Dorsolateral prefrontal cortex (tissue), 120 donors: ENCODE measurements at regions of chr5 and their contacts with region 1.

Region 1: GRCh38 chr5:80093796-80094195 is 58.6 kb downstream of the THBS4 start:
- DNase-seq: no peak
- H3K4me3 ChIP-seq: no peak overlapping the region
- H3K27ac ChIP-seq: peak overlapping the region in 1 of 59 donors; percentile 10
- H3K27me3 ChIP-seq: no peaks in the 10 kb centered on the region
- CTCF ChIP-seq: no peak

Region 2: GRCh38 chr5:80153586-80154126 is 59.9 kb after region 1 on chr5:
- intact Hi-C with region 1: loop called in 1 of 2 experiments (anchors 5 kb)
- DNase-seq: peak in 5 of 10 donors; percentile 44 to 56 (median 51)
- H3K4me3 ChIP-seq: peak overlapping the region in 4 of 59 donors; percentile 1 to 30 (median 10)
- H3K27ac ChIP-seq: peak overlapping the region in 58 of 59 donors; percentile 16 to 92 (median 80)
- H3K27me3 ChIP-seq: no peaks in the 10 kb centered on the region
- CTCF ChIP-seq: no peak

Region 3: GRCh38 chr5:80255732-80256479 is 162.1 kb after region 1 on chr5 and contains the start of gene SERINC5:
- intact Hi-C with region 1: loop called in 1 of 2 experiments (anchors 5 kb)
- DNase-seq: peak; percentile 73 to 92 (median 84)
- H3K4me3 ChIP-seq: peak within 1 kb of the TSS; percentile 54 to 98 (median 86)
- H3K27ac ChIP-seq: peak within 1 kb of the TSS; percentile 83 to 98 (median 94)
- H3K27me3 ChIP-seq: no peaks in the 10 kb centered on the region
- CTCF ChIP-seq: peak in 14 of 56 donors; percentile 5 to 43 (median 20)
- total RNA-seq, gene SERINC5: 25.0 to 117 (median 44.7) TPM

Region 4: GRCh38 chr5:80308526-80308925 is 214.7 kb after region 1 on chr5:
- intact Hi-C with region 1: loop called (anchors 2 to 10 kb)
- DNase-seq: no peak
- H3K4me3 ChIP-seq: no peak overlapping the region
- H3K27ac ChIP-seq: no peak overlapping the region
- H3K27me3 ChIP-seq: no peaks in the 10 kb centered on the region
- CTCF ChIP-seq: no peak

Region 5: GRCh38 chr5:80487829-80488721 is 394.3 kb after region 1 on chr5 and contains the start of gene FAM151B:
- intact Hi-C with region 1: loop called in 1 of 2 experiments (anchors 10 kb)
- DNase-seq: peak; percentile 64 to 93 (median 84)
- H3K4me3 ChIP-seq: peak within 1 kb of the TSS; percentile 51 to 94 (median 80)
- H3K27ac ChIP-seq: peak within 1 kb of the TSS in 57 of 59 donors; percentile 18 to 88 (median 77)
- H3K27me3 ChIP-seq: no peaks in the 10 kb centered on the region
- CTCF ChIP-seq: peak in 47 of 56 donors; percentile 8 to 64 (median 39)
- total RNA-seq, gene FAM151B: 2.8 to 11.6 (median 6.4) TPM